ENCODE measurements at regions of chr7 and their contacts with region 1.

Region 1: GRCh38 chr7:143240291-143241168 is 18.7 kb downstream of the TAS2R40 start:
- DNase-seq: peak; percentile 77
- H3K4me3 ChIP-seq: no peak overlapping the region
- H3K27ac ChIP-seq: peak overlapping the region in 1 of 4 donors; percentile 16
- H3K4me1 ChIP-seq: no peaks in the 10 kb centered on the region
- H3K27me3 ChIP-seq: no peaks in the 10 kb centered on the region
- CTCF ChIP-seq: peak; percentile 54 to 94 (median 77)
- EP300 ChIP-seq: no peak
- POLR2A ChIP-seq: no peak

Region 2: GRCh38 chr7:142943706-142944268 is 296.7 kb before region 1 on chr7:
- intact Hi-C with region 1: no loop called
- DNase-seq: no peak
- H3K4me3 ChIP-seq: no peak overlapping the region
- H3K27ac ChIP-seq: no peak overlapping the region
- H3K4me1 ChIP-seq: no peaks in the 10 kb centered on the region
- H3K27me3 ChIP-seq: no peaks in the 10 kb centered on the region
- CTCF ChIP-seq: no peak
- EP300 ChIP-seq: no peak
- POLR2A ChIP-seq: no peak

Region 3: GRCh38 chr7:143305423-143306070 is 65.0 kb after region 1 on chr7:
- intact Hi-C with region 1: loop called (anchors 2 kb)
- DNase-seq: no peak
- H3K4me3 ChIP-seq: no peak overlapping the region
- H3K27ac ChIP-seq: no peak overlapping the region
- H3K4me1 ChIP-seq: no peaks in the 10 kb centered on the region
- H3K27me3 ChIP-seq: no peaks in the 10 kb centered on the region
- CTCF ChIP-seq: peak; percentile 28 to 72 (median 65)
- EP300 ChIP-seq: no peak
- POLR2A ChIP-seq: no peak

Region 4: GRCh38 chr7:143416565-143417149 is 176.1 kb after region 1 on chr7:
- intact Hi-C with region 1: loop called (anchors 1 kb)
- DNase-seq: no peak
- H3K4me3 ChIP-seq: no peak overlapping the region
- H3K27ac ChIP-seq: no peak overlapping the region
- H3K4me1 ChIP-seq: peaks cover 0 to 8% (median 0%) of the 10 kb centered on the region in 4 donors
- H3K27me3 ChIP-seq: no peaks in the 10 kb centered on the region
- CTCF ChIP-seq: peak; percentile 33 to 70 (median 62)
- EP300 ChIP-seq: no peak
- POLR2A ChIP-seq: no peak